Activated T-helper 1 cell treated with anti-CD3 and anti-CD28 coated beads, Interleukin-12 subunit alpha, Interleukin-12 subunit beta, Interleukin-2, Interleukin-4 antibody, amounts not matched to agents 30 ng/mL and 10 ng/mL and 1 ng/mL, durations not matched to agents 14 hours and 24 hours and 36 hours (primary cell): ENCODE measurements at regions of chr12 and their contacts with region 1.

Region 1: DNA sequence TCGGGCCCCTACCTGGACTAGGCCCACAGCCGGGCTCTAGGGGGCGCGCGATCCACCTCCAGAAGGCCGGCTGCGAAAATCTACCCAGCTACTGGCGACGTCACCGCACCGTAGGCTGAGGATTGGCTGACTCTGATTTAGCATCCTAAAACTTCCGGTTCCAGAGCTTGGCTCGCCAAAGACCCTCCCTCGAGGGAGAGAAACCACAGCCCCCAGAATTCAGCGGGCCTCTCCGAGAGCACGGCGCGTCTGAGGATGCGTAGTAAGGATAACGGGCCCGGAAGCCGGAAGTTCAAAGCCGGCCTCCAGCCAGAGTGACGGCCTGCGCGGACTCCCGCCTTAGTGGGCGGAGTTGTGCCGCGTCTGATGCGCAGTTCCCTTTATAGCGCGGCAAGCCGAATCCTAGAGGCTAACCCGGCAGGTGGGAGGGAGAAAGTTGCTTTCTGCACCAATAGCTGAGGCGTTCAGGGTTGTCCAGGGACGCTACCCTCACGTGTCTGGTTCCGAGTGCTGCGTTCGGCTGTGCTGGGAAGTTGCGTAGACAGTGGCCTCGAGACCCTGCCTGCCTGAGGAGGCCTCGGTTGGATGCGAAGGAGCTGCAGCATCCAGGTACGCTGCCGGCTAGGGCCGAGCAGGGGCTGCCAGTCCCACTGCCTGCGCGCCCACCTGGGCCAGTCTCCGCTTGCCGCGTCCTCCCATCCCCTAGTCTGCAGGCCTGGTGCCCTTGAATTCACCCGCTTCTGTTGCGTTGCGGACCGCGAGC is at the start of gene COX14:
- DNase-seq: peak; percentile 98
- H3K4me3 Mint-ChIP-seq: peak within 1 kb of the TSS; percentile 94
- H3K27ac Mint-ChIP-seq: peak within 1 kb of the TSS; percentile 94
- H3K4me1 Mint-ChIP-seq: peaks cover 42% of the 10 kb centered on the region
- H3K27me3 Mint-ChIP-seq: no peaks in the 10 kb centered on the region
- total RNA-seq, gene COX14: 44.3 and 45.6 TPM in 2 replicates

Region 2: DNA sequence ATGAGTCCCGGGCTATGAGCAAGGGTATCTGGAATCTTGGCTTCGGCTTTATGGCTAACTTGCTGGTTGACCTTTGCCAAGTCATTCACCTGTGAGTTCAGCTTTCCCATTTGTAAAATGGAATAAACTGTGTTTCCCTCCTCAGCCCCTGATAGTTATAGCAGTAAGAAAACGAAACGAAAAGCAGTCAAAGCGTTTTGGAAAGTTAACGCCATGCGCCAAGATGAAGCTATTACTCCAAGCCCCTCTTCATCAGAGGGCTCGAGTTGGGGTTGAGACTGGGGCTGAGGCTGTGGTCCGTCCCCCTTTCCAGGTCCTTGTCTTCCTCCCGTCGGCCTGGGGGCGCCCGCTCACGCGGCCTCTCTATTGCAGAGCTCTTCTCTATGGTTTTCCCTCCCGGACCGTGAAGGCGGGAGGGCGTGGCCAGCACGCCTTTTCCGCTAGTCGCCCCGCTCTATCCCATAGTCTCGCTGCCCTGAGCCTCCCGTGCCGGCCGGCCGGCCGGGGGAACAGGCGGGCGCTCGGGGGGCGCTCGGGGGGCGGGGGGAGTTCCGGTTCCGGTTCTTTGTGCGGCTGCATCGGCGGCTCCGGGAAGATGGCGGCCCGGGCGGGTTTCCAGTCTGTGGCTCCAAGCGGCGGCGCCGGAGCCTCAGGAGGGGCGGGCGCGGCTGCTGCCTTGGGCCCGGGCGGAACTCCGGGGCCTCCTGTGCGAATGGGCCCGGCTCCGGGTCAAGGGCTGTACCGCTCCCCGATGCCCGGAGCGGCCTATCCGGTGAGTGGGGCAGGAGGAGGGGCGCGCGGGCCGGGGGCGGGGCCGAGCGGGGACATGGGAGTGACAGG is 26.9 kb before region 1 on chr12 and contains the start of gene SMARCD1:
- intact Hi-C with region 1: loop called (anchors 1 kb)
- DNase-seq: peak; percentile 78
- H3K4me3 Mint-ChIP-seq: peak within 1 kb of the TSS; percentile 90
- H3K27ac Mint-ChIP-seq: peak within 1 kb of the TSS; percentile 93
- H3K4me1 Mint-ChIP-seq: peaks cover 31% of the 10 kb centered on the region
- H3K27me3 Mint-ChIP-seq: no peaks in the 10 kb centered on the region
- total RNA-seq, gene SMARCD1: 74.6 and 75.3 TPM in 2 replicates

Region 3: GRCh38 chr12:50132505-50133135 is 20.7 kb after region 1 on chr12:
- intact Hi-C with region 1: loop called (anchors 2 kb)
- DNase-seq: no peak
- H3K4me3 Mint-ChIP-seq: no peak overlapping the region
- H3K27ac Mint-ChIP-seq: peak overlapping the region; percentile 40
- H3K4me1 Mint-ChIP-seq: peaks cover 8% of the 10 kb centered on the region
- H3K27me3 Mint-ChIP-seq: no peaks in the 10 kb centered on the region

Region 4: DNA sequence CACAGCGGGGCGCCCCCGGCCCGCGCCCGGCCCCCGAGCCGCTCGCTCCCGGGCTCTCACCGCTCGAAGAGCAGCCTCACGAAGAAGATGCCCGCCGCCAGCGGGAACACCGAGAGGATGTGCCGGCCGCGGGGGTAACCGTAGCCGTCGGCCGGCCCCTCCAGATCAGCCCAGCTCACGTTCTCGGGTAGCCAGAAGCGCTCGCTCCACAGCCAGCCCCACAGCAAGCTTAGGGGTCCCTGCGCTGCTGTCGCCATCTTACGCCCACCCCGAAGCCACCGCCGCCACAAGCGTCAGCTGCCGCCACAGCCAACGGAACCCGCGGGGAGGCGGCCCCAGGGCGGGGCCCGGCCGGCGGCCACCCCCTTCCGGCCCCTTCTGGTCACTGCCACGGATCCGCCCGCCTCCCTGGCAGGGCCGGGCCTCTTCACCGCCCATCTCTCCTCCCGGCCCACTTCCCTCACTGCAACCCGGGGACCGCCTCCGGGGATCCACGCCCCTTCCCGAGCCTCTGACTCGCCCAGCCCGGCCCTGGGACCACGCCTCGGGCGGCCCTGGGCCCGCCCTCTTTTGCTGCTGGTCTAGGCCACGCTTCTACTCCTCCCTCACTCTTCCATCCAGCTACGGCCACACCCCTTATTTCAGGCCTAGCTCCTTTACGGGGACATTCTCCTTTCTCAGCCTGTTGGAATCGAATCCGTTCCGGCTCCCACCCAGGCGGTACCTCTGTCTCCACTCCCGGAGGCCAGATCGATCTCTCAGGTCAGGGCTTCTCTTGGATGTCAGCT is 55.4 kb after region 1 on chr12 and contains the start of gene CERS5:
- intact Hi-C with region 1: loop called (anchors 1 kb)
- DNase-seq: peak; percentile 98
- H3K4me3 Mint-ChIP-seq: peak within 1 kb of the TSS; percentile 99
- H3K27ac Mint-ChIP-seq: peak within 1 kb of the TSS; percentile 95
- H3K4me1 Mint-ChIP-seq: peaks cover 38% of the 10 kb centered on the region
- H3K27me3 Mint-ChIP-seq: no peaks in the 10 kb centered on the region
- total RNA-seq, gene CERS5: 64.2 and 67.9 TPM in 2 replicates

Region 5: GRCh38 chr12:50174971-50175715 is 63.3 kb after region 1 on chr12:
- intact Hi-C with region 1: loop called (anchors 2 kb)
- DNase-seq: no peak
- H3K4me3 Mint-ChIP-seq: no peak overlapping the region
- H3K27ac Mint-ChIP-seq: no peak overlapping the region
- H3K4me1 Mint-ChIP-seq: peaks cover 1% of the 10 kb centered on the region
- H3K27me3 Mint-ChIP-seq: no peaks in the 10 kb centered on the region

Region 6: DNA sequence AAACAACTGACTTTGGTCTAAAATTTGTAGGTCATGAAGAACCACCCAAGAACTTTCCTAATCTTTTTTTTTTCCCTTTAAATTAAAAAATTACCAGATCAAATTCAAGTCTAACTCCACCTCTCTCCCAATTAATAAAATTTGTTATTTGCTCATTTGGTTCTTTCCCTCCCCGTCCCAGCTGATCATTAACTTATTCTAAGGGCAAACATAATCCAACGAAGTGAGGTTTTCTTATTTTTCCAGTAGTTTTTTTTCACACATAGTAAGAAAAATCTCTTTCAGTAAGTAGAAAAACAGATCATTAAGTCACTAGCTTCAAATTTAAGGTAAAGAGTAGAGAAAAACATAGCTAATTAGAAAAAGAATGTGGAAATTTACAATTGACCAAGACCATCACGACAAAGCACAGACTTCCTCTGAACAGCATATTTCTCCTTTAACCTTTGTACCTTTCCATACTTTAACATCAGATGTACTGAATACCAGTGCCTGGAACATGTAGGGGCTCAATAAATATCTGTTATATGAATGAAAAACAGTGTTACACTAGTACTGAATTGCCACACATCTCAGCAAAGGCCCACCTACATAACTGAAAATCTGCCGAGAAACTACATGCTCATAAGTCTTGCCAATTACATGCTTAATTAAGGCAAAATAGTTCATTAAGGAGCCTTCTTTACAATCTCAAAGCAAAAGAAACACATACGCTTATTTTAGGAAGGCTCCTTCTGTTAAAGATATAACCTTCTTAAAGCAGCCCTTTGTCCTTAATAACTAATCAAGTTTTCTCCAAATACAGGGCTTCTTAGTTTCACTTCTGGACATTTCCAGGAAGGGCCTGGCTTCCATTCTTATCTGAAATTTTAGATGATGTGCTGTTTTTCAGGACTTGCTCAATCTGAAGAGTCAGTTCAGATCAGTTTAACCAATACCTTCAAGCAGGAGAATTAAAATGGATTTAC is 159.7 kb after region 1 on chr12:
- intact Hi-C with region 1: no loop called
- DNase-seq: no peak
- H3K4me3 Mint-ChIP-seq: no peak overlapping the region
- H3K27ac Mint-ChIP-seq: no peak overlapping the region
- H3K4me1 Mint-ChIP-seq: peaks cover 7% of the 10 kb centered on the region
- H3K27me3 Mint-ChIP-seq: no peaks in the 10 kb centered on the region

Region 7: DNA sequence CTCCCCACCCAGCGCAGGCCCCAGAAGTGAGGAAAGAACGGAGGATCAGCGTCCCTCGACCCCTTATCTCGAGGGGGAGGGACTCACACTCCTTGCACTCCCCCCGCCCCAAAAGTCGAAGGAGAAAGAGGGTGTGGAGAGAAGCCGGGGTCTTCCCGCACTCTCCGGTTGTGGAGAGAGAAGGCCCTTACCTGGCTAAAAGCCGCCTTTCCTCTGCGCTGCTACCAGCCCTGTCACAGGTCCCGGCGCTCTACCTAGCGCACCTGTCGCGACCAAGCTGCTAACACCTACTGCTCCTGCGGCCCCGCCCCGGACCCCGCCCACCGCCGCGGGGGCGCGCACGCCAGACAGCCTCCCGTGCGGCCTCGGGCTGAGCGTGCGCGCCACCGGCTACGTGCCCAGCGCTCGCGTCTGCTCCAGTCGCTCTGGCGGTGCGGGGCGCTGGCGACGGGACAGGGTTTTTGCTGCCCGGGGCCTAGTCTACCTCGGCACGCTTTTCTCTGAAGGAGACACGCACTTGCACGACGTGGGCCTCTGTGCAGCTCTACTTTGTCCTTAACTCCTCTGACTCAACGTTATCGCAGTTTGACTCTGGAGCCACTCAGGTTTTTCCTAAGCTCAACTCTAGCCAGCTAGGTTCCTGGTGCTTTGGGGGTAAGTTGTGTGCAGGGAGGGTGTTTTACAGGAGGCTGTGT is 171.5 kb after region 1 on chr12 and contains the start of gene LIMA1:
- intact Hi-C with region 1: loop called (anchors 5 kb)
- DNase-seq: peak; percentile 85
- H3K4me3 Mint-ChIP-seq: peak within 1 kb of the TSS; percentile 89
- H3K27ac Mint-ChIP-seq: peak within 1 kb of the TSS; percentile 74
- H3K4me1 Mint-ChIP-seq: peaks cover 17% of the 10 kb centered on the region
- H3K27me3 Mint-ChIP-seq: peaks cover 20% of the 10 kb centered on the region
- total RNA-seq, gene LIMA1: 64.0 and 68.4 TPM in 2 replicates

Region 8: GRCh38 chr12:51025836-51026638 is 914.2 kb after region 1 on chr12 and contains the start of gene SLC11A2:
- intact Hi-C with region 1: loop called (anchors 10 kb)
- DNase-seq: peak; percentile 91
- H3K4me3 Mint-ChIP-seq: peak within 1 kb of the TSS; percentile 92
- H3K27ac Mint-ChIP-seq: peak within 1 kb of the TSS; percentile 98
- H3K4me1 Mint-ChIP-seq: peaks cover 55% of the 10 kb centered on the region
- H3K27me3 Mint-ChIP-seq: peaks cover 18% of the 10 kb centered on the region
- total RNA-seq, gene SLC11A2: 56.9 and 63.9 TPM in 2 replicates